Tibial artery (tissue), 4 donors: ENCODE measurements at regions of chr2 and their contacts with region 1.

Region 1: DNA sequence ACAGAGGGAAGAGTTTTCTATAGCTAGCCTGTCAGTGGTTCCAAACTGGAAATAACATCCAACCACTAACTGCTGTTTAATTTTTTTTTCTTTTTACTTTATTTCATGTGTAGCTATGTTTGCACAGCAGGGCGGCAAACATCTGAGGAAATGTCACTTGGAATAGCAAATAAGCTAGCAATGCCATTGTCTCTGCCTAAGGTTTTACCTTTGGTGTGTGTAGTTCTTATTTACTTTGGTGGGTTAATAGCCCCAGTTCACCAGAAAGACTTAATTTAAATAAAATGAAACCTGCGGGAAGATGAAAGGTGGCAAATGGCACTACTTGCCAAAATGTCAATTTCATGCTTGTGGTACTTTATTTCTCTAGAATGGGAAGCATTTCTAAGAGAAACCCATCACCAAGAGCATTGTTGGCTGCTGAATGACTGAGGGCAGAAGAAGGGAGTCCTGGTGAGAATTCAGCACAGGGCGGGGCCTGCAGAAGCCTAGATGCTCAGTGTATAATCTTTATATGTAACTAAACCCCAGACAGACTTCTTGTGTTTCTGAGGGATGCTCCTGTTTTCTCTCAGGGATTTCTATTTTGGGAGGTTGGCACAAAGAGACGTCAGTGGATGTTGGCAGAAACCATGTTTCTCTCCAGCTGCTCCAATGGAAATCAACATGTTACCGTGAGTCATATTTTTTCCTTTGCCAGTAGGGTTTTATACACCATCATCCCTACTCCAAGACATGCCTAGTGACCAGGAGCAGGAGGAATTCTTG is 300.4 kb upstream of the NT5C1B start:
- DNase-seq: no peak
- H3K4me3 ChIP-seq: no peak overlapping the region
- H3K27ac ChIP-seq: peak overlapping the region; percentile 65 to 69
- H3K4me1 ChIP-seq: peaks cover 0 to 15% (median 8%) of the 10 kb centered on the region in 4 donors
- H3K27me3 ChIP-seq: no peaks in the 10 kb centered on the region
- CTCF ChIP-seq: no peak

Region 2: GRCh38 chr2:18777250-18777812 is 112.4 kb before region 1 on chr2:
- intact Hi-C with region 1: no loop called
- DNase-seq: no peak
- H3K4me3 ChIP-seq: no peak overlapping the region
- H3K27ac ChIP-seq: no peak overlapping the region
- H3K4me1 ChIP-seq: no peaks in the 10 kb centered on the region
- H3K27me3 ChIP-seq: no peaks in the 10 kb centered on the region
- CTCF ChIP-seq: no peak

Region 3: DNA sequence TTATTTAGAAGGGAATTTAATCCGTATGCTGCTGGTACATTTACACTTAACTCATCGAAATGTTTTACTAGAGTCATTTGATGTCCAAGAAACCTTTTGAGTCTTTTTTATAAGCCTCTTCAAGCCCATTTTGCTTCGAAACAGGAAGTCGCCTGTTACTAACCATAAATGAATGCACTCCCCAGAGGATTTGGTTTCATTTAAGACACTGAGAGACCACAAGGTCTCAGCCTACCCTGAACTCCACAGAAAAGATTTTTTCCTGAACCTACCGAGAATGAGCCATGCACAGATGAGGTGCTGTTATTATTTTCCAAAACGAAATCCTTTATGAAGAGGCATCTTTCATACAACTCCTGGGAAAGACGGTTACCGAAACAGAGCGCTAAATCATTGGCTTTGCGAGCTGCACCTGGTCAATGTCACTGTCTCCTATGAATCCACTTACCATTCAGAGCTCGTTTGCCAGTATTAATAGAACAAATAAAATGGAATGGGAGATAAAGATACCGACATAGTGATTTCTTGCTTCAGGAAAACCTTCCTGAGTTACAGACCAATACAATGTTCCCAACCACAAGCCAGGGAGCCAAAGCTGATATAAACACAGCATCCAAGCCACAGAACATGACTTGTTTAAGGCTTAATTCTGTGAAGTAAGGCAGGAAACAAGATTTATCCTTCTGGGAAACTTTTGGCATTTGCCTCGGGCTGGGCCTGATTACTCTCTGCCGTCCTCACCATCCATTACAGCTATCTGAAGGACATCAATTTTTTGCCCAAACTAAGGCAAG is 86.6 kb after region 1 on chr2:
- intact Hi-C with region 1: loop called (anchors 5 kb)
- DNase-seq: peak in 1 of 2 donors; percentile 25
- H3K4me3 ChIP-seq: peak overlapping the region; percentile 20 to 31
- H3K27ac ChIP-seq: peak overlapping the region; percentile 58 to 60
- H3K4me1 ChIP-seq: peaks cover 0 to 43% (median 22%) of the 10 kb centered on the region in 4 donors
- H3K27me3 ChIP-seq: no peaks in the 10 kb centered on the region
- CTCF ChIP-seq: no peak